ENCODE measurements at regions of chr9 and their contacts with region 1.

Region 1: DNA sequence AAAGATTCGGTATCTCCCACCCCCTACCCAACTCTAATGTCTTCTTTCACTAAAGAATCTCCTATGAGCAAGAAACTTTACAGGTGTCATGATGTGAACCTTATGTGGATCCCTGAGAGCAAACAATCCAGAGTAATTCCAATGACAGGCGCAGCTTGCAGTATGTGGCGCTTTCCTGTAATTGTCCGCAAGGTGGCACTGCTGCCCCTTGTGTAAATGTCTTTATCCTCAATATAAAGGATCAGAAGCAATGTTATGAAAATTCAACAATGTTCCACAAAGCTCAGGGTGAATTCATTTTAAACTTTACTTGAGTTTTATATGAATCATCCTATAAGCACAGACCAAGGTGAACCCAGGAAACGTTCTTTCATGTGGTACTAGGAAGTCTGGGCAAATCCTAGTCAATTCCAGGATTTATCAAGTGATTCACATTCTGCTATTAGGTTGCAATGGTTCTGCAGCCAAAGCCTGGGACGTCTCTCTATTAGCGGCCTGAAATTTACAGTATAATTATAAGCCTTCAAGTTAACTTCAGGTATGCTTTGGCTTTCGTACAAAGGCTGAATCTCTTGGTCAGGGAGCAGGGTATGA is 113.7 kb downstream of the TRPM6 start:
- DNase-seq: peak; percentile 61 to 89
- ATAC-seq: peak; percentile 79

Region 2: DNA sequence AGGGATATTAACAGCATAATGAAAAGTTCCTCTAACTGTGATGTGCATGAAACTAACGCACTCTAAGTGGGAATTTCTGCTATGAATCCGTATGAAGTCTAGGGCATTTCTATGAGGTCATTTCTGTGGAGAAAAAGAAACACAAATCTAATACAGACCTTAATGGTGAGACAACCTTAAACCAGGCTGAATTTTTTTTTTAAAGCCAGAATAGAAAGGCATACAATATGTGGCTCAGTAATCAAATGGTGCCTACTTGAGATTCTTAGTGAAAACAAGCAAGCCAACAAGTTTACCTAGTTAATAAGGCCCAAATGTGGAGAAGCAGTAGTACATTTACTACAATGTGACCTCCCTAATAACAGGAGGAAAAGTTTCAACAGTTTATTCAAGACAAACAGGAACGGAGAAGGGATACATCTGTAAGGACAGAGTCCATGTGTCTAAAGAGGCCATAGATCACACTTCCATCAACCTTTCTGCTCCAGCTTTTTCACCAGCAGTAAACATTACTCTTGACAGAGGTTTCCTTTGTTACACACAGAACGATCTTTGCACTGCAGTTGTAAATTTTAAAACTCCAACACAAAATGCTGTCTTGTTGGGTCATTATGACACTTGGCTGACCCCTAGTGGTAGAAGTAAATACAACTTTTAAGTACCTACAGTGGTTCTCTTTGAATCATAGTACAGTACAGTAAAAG is 227.9 kb after region 1 on chr9:
- intact Hi-C with region 1: loop called in 1 of 2 experiments (anchors 2 kb)
- DNase-seq: no peak
- ATAC-seq: peak; percentile 99

Region 3: DNA sequence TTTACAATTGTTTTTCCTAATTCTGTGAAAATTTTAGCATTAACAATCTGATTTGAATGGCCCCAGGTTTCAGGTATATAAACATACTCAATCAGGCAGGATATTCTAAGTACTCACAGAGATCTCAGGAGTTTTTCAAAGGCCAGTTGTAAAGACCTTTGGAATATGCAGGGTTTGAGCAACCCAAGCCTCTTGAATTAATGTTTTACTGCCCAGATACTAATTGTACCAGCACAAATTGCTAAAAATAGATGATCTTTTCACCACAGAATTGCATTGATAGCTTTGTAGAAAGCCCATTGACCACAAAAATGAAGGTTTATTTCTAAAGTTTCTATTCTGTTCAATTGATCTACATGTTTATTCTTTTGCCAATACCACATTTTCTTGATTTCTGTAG is 500.8 kb after region 1 on chr9:
- intact Hi-C with region 1: no loop called
- DNase-seq: no peak
- ATAC-seq: no peak